Upper lobe of right lung (tissue), 1 donor: ENCODE measurements at regions of chr11 and their contacts with region 1.

Region 1: DNA sequence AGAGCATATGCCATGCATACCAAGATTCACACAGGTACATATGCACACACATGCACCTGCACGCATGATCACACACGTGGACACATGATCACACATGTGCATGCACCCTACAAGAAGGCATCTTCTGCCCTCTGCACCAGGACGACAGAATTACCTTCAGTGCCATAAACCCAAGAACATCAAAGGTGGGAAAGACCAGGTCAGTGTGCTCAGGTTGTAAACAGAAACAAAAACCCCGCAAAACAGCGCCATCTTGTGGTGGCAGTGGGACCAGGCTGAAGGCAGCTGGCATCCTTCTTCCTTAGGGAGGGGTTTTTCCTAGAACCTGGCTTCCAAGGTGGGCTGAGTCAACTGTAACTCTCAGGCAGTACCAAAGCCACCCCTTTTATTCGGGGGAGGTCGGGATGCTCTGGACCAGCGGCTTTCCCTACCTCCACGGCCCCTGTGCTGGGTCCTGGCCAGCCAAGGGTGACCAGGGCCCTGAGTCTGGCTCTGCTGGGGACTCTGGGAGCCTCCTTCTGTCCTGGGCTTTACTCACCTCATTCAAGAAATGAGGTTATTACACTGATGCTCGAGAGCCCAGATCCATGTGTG is 69.4 kb upstream of the FGF3 start:
- DNase-seq: no peak
- ATAC-seq: peak; percentile 70
- H3K4me3 ChIP-seq: no peak overlapping the region
- H3K27ac ChIP-seq: no peak overlapping the region
- H3K4me1 ChIP-seq: peaks cover 7% of the 10 kb centered on the region
- H3K27me3 ChIP-seq: peaks cover 32% of the 10 kb centered on the region
- CTCF ChIP-seq: peak; percentile 87

Region 2: DNA sequence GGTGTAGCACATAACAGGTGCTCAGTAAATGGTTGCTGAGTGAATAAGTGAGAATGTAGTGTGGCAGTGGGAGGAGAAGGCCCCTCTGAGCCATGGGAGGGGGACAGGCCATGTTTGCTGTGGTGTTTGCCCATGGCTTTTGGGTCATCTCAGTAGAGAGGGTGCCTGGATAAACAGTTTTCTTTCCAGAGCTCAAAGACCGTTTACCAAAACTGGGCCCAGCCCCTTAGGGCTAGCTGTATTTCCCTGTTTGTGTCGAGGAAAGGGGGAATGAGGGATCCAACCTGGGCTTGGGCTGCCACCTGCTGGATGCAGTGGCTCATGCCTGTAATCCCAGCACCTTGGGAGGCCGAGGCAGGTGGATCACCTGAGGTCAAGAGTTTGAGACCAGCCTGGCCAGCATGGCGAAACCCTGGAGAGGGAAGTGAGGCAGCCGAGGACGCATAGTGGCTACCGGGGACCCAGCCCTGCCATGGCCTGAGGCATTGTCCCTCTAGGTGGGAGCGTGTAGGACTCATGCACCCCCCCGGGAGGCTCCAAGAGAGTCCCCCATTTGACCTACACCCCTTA is 204.7 kb before region 1 on chr11:
- intact Hi-C with region 1: loop called (anchors 10 kb)
- DNase-seq: peak; percentile 66
- ATAC-seq: peak; percentile 59
- H3K4me3 ChIP-seq: no peak overlapping the region
- H3K27ac ChIP-seq: no peak overlapping the region
- H3K4me1 ChIP-seq: peaks cover 8% of the 10 kb centered on the region
- H3K27me3 ChIP-seq: peaks cover 12% of the 10 kb centered on the region
- CTCF ChIP-seq: peak; percentile 37

Region 3: GRCh38 chr11:69718147-69718546 is 170.4 kb before region 1 on chr11:
- intact Hi-C with region 1: no loop called
- DNase-seq: no peak
- ATAC-seq: no peak
- H3K4me3 ChIP-seq: no peak overlapping the region
- H3K27ac ChIP-seq: no peak overlapping the region
- H3K4me1 ChIP-seq: no peaks in the 10 kb centered on the region
- H3K27me3 ChIP-seq: peaks cover 35% of the 10 kb centered on the region
- CTCF ChIP-seq: no peak

Region 4: GRCh38 chr11:69791276-69792180 is 97.1 kb before region 1 on chr11:
- intact Hi-C with region 1: no loop called
- DNase-seq: no peak
- ATAC-seq: no peak
- H3K4me3 ChIP-seq: no peak overlapping the region
- H3K27ac ChIP-seq: no peak overlapping the region
- H3K4me1 ChIP-seq: no peaks in the 10 kb centered on the region
- H3K27me3 ChIP-seq: peaks cover 4% of the 10 kb centered on the region
- CTCF ChIP-seq: no peak

Region 5: DNA sequence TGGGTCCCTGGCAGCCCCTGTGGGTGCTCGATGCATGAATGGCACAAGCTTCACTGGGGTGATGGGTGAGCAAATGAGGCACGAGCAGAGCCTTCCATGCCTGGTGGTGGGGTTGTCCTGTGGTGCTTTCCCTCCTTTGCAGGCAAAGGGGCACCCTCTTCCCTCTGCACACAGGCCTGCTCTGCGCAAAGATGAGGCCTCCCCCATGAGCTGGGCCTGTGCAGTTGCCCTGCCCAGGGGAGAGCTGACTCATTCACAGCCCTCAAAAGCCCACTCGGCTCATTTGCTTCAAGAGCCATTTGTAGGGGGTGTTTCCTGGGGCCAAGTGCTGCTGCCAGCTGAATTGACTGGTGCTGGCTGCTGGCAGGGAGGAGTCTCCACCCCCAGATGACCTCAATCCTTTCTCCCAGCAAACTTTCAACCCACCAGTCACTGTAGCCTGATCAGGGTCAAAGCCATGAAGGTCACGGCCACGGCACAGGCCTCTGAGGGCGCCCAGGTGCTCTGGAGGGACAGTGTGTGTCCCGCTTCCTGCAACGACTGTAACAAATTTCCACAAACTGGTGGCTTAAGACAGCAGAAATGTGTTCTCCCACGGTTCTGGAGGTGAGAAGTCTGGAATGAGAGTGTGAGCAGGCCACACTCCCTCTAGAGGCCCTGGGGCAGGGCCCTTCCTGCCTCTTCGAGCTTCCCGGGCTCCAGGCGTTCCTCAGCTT is 140.7 kb after region 1 on chr11:
- intact Hi-C with region 1: no loop called
- DNase-seq: no peak
- ATAC-seq: no peak
- H3K4me3 ChIP-seq: no peak overlapping the region
- H3K27ac ChIP-seq: no peak overlapping the region
- H3K4me1 ChIP-seq: no peaks in the 10 kb centered on the region
- H3K27me3 ChIP-seq: no peaks in the 10 kb centered on the region
- CTCF ChIP-seq: no peak

Region 6: DNA sequence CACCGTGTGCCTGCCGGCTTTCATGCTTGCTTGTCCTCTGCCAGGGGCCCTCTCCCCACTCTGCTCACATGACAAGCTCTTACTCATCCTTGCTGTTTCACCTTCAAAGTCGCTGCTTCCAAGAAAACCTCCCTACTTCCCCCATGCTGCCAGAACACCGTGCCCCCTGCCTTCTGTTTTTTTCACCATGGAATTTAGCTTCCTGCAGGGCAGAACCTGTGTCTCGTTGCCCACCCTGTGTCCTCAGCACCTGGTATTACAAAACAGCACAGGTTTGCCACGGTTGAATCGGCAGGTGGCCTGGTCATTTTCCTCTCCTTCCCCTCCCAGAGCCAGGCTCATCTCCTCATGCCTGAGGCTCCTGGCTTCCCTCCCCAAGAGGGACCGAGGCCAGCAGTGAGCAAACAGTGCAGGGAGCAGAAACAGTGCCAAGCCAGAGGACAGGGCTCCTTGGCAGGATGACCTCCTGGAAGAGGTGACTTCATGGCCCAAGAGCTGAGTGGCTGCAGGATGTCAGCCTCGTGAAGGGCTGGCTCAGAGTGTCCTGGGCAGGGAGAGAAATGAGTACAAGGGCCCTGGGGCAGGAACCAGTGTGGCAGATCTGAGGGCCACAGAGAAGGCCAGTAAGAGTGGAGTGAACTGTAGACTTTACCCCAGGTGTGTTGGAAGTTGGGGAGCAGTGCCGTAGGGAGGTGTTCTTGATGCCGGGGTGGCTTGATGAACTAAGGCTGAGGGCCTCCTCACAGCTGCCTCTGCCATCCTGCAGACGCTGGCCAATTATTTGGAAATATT is 359.1 kb after region 1 on chr11:
- intact Hi-C with region 1: no loop called
- DNase-seq: no peak
- ATAC-seq: peak; percentile 52
- H3K4me3 ChIP-seq: no peak overlapping the region
- H3K27ac ChIP-seq: no peak overlapping the region
- H3K4me1 ChIP-seq: no peaks in the 10 kb centered on the region
- H3K27me3 ChIP-seq: no peaks in the 10 kb centered on the region
- CTCF ChIP-seq: no peak